ENCODE measurements at regions of chr1 and their contacts with region 1.

Region 1: GRCh38 chr1:180057883-180058396 is 96.7 kb upstream of the QSOX1 start:
- DNase-seq: no peak
- ATAC-seq: no peak
- H3K4me3 ChIP-seq: no peak overlapping the region
- H3K4me3 Mint-ChIP-seq: no peak overlapping the region
- H3K27ac ChIP-seq: no peak overlapping the region
- H3K27ac Mint-ChIP-seq: no peak overlapping the region
- H3K4me1 ChIP-seq: no peaks in the 10 kb centered on the region
- H3K4me1 Mint-ChIP-seq: peaks cover 0 to 2% (median 0%) of the 10 kb centered on the region in 3 donors
- H3K27me3 ChIP-seq: no peaks in the 10 kb centered on the region
- H3K27me3 Mint-ChIP-seq: no peaks in the 10 kb centered on the region

Region 2: DNA sequence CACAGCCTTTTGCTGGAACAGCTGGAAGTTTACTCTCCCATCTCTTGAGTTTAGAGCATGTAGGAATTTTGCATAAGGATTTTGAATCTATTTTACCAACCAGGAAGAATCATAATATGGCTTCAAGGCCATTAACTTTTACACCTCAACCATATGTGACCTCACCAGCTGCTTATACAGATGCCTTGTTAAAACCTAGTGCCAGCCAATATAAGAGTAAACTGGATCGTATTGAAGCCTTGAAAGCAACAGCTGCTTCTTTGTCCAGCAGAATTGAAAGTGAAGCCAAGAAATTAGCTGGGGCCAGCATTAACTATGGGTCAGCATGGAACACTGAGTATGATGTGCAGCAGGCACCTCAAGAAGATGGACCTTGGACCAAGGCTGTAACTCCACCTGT is 37.9 kb before region 1 on chr1:
- CTCF ChIA-PET with region 1: no interaction called
- POLR2A ChIA-PET with region 1: interaction called in 1 of 2 experiments, 11 read pairs
- DNase-seq: no peak
- ATAC-seq: no peak
- H3K4me3 ChIP-seq: no peak overlapping the region
- H3K4me3 Mint-ChIP-seq: no peak overlapping the region
- H3K27ac ChIP-seq: no peak overlapping the region
- H3K27ac Mint-ChIP-seq: peak overlapping the region in 1 of 2 donors; percentile 1
- H3K4me1 ChIP-seq: no peaks in the 10 kb centered on the region
- H3K4me1 Mint-ChIP-seq: no peaks in the 10 kb centered on the region
- H3K27me3 ChIP-seq: no peaks in the 10 kb centered on the region
- H3K27me3 Mint-ChIP-seq: no peaks in the 10 kb centered on the region

Region 3: GRCh38 chr1:180083164-180083563 is 25.2 kb after region 1 on chr1:
- CTCF ChIA-PET with region 1: interaction called in 1 of 2 experiments, 10 read pairs
- POLR2A ChIA-PET with region 1: no interaction called
- DNase-seq: no peak
- ATAC-seq: no peak
- H3K4me3 ChIP-seq: no peak overlapping the region
- H3K4me3 Mint-ChIP-seq: no peak overlapping the region
- H3K27ac ChIP-seq: no peak overlapping the region
- H3K27ac Mint-ChIP-seq: no peak overlapping the region
- H3K4me1 ChIP-seq: no peaks in the 10 kb centered on the region
- H3K4me1 Mint-ChIP-seq: no peaks in the 10 kb centered on the region
- H3K27me3 ChIP-seq: no peaks in the 10 kb centered on the region
- H3K27me3 Mint-ChIP-seq: no peaks in the 10 kb centered on the region